Right ventricle myocardium superior (tissue), 1 donor: ENCODE measurements at regions of chr15 and their contacts with region 1.

Region 1: GRCh38 chr15:101242160-101242998 is 9.5 kb downstream of the CHSY1 start:
- DNase-seq: no peak
- ATAC-seq: peak; percentile 40

Region 2: DNA sequence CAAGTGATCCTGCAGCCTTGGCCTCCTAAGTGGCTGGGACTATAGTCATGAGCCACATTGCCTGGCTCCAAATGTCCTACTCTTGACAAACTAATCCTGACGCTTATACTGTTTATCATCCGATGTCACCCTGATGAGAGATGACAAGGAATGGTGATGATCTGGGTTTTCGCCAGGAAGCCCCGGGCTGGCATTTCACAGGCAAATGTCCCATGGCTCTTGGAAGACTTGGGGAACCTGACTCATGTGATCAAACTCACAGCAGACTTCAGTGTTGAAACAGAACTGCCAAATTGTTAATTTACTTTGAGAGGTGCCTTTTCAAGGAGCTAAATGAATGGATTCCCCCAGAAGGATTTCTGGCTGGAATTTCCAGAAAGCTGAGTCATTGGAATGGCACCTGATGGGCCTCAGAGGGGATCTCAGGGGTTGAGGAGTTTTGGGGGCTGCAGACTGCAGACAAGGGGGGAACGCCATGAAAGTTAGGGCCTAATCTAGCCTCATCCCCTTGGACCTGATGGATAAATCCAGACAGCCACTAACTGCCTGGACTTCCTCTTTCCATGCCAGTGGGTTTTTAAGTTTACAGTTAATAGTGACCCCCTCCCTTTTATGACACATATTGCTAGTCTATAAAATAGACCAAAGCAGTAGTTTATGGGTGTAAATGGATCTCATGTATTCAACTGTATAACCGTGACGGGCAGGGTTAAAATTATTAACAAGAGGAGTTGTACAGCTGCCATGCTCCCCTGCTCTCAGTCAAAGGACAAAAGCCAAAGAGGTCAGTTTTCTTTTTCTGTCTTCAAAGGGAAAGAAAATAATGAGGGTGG is 137.1 kb before region 1 on chr15:
- intact Hi-C with region 1: no loop called
- DNase-seq: no peak
- ATAC-seq: peak; percentile 64

Region 3: DNA sequence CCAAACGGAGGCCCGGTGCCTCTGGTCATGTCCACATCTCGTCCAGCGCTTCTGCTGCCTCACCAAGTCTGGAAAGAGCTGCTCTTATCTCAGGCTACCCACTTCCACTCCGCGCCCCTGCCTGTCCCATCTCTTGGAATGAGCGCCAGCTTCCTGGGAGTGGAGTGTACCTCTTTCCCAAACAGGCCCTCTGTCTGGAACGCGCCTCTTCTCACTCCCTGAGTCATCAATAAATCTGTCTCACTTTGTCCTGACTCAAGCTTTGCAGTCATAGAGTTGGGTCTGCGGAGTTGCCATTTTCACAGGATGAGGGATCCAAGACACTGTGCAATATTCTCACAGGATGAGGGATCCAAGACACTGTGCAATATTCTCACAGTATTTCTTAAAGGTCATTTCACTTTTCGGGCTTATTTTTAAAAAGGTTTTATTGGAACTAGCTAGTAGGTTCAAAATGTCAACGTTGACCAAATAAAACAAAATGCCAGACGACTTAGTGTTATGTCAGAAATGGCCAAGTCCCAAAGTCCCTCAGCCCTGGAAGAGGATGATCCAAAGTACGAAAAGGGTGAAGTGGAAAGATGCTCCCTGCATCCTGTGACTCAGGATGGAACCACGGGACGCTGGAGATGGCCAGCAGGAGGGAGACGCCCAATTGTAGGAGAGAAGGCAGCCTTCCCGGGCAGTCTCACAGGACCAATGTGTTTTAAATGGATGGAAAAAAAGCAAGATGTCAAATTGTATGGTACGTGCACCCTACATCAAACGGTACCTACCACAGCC is 71.6 kb before region 1 on chr15:
- intact Hi-C with region 1: loop called (anchors 10 kb)
- DNase-seq: no peak
- ATAC-seq: no peak